Activated naive CD4-positive, alpha-beta T cell treated with anti-CD3 and anti-CD28 coated beads for 36 hours (primary cell): ENCODE measurements at regions of chr7 and their contacts with region 1.

Region 1: GRCh38 chr7:91636129-91636724 is 244.3 kb downstream of the MTERF1 start:
- DNase-seq: peak; percentile 36
- H3K4me3 Mint-ChIP-seq: no peak overlapping the region
- H3K27ac Mint-ChIP-seq: no peak overlapping the region
- H3K4me1 Mint-ChIP-seq: no peaks in the 10 kb centered on the region
- H3K27me3 Mint-ChIP-seq: no peaks in the 10 kb centered on the region

Region 2: DNA sequence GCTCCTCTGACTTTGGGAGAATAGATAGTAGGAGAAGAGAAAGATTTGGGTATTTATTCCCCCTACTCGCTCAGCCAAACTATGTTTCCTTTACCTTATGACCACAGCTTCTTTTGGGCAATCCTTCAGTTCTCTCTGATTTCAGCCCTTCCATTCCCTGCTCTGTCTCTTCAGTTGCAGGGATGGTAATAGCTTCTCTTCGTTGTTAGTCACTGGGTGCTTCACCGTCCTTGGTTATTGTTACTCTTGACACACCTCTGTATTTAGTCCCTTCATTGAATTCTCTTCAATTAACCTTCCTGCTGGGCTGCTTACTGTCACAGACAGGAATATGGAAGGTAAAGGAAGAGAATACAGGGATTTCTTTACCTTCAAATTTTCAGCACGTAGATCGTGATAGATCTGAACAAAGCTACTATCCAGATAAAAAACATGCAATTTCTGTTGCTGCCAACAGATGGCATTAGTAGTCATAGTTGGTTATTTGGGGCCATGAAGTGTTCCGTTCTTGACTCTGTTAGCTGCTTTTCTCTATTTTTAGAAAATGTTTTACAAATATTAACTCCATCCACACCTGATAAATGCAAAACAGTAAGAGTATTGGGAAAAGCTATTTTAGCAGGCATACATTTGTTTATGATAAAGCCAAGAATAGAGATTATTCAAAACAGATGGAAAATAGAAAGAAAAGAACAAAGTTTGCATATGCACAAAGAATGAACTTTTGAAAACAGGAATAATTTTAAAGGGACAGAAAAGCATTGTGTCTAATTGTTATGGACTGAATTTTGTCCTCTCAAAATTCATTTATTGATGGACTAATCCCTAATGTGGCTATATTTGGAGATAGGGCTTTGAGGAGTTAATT is 1180.8 kb before region 1 on chr7:
- CTCF ChIA-PET with region 1: no interaction called
- intact Hi-C with region 1: loop called (anchors 5 kb)
- DNase-seq: no peak
- H3K4me3 Mint-ChIP-seq: no peak overlapping the region
- H3K27ac Mint-ChIP-seq: no peak overlapping the region
- H3K4me1 Mint-ChIP-seq: peaks cover 5% of the 10 kb centered on the region
- H3K27me3 Mint-ChIP-seq: peaks cover 3% of the 10 kb centered on the region

Region 3: GRCh38 chr7:90552521-90552920 is 1083.7 kb before region 1 on chr7:
- CTCF ChIA-PET with region 1: no interaction called
- intact Hi-C with region 1: loop called (anchors 5 kb)
- DNase-seq: no peak
- H3K4me3 Mint-ChIP-seq: no peak overlapping the region
- H3K27ac Mint-ChIP-seq: no peak overlapping the region
- H3K4me1 Mint-ChIP-seq: no peaks in the 10 kb centered on the region
- H3K27me3 Mint-ChIP-seq: peaks cover 26% of the 10 kb centered on the region

Region 4: DNA sequence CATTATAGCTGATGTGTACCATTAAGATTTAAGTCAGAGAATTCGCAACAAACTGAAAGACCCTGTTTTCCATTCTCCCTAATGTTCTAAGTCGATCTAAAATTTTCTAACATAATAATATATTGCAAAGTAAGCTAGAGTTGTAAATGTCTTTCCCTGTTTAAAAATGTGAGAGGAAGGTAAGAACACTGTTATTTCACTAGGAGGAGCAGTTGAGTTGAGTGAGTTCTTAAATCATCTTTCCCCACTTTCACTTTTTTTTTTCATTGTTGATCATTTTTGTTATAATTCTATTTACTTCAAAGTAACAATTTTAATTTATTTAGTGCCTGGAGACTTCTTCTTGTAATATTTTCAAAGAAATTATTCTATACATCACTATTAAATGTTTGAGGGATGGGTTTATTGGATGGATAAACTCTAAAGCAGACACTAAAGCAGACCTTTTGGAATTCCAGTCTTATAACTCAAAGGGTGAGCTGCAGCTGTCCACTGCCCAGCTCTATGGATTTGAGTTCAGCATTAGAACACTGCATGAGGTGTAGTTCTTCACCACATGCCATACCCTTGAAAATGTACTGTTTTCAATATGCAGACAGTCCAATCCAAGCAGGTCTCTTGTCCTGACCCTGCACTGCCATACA is 553.3 kb before region 1 on chr7:
- CTCF ChIA-PET with region 1: no interaction called
- intact Hi-C with region 1: loop called (anchors 1 kb)
- DNase-seq: no peak
- H3K4me3 Mint-ChIP-seq: peak overlapping the region; percentile 13
- H3K27ac Mint-ChIP-seq: no peak overlapping the region
- H3K4me1 Mint-ChIP-seq: peaks cover 36% of the 10 kb centered on the region
- H3K27me3 Mint-ChIP-seq: no peaks in the 10 kb centered on the region

Region 5: DNA sequence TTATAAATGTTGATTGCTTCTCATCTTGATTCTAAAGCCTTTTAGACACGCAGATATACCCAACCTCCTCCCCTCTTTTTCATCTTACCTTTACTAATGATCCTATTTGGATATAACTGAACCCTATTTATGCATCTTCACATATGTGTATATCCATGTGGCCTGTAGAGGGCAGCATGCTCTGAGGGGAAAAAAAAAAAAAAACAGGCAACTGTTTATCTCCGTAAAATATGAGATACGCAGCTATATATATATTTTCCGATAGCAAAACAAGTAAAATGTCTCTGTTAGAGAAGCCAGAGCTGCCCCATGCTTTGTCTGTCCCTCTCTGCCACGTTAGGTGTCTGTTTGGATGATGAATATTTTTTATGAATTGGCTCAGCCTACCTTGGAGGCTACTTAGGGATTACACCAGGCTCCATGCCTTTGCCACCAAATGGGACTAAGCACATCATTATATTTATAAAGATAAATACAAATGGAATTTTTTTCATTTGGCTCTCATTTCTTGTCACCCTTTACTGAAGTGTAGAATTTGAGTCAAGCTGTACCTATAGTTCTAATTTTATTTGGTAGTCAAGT is 546.8 kb before region 1 on chr7:
- CTCF ChIA-PET with region 1: no interaction called
- intact Hi-C with region 1: loop called (anchors 1 kb)
- DNase-seq: peak; percentile 11
- H3K4me3 Mint-ChIP-seq: peak overlapping the region; percentile 19
- H3K27ac Mint-ChIP-seq: no peak overlapping the region
- H3K4me1 Mint-ChIP-seq: peaks cover 17% of the 10 kb centered on the region
- H3K27me3 Mint-ChIP-seq: no peaks in the 10 kb centered on the region

Region 6: GRCh38 chr7:91264046-91264923 is 371.9 kb before region 1 on chr7 and contains the start of gene FZD1:
- CTCF ChIA-PET with region 1: no interaction called
- intact Hi-C with region 1: loop called (anchors 10 kb)
- DNase-seq: peak; percentile 85
- H3K4me3 Mint-ChIP-seq: peak within 1 kb of the TSS; percentile 82
- H3K27ac Mint-ChIP-seq: no peak within 1 kb of the TSS
- H3K4me1 Mint-ChIP-seq: peaks cover 8% of the 10 kb centered on the region
- H3K27me3 Mint-ChIP-seq: peaks cover 53% of the 10 kb centered on the region
- total RNA-seq, gene FZD1: 0.29 to 0.30 TPM

Region 7: DNA sequence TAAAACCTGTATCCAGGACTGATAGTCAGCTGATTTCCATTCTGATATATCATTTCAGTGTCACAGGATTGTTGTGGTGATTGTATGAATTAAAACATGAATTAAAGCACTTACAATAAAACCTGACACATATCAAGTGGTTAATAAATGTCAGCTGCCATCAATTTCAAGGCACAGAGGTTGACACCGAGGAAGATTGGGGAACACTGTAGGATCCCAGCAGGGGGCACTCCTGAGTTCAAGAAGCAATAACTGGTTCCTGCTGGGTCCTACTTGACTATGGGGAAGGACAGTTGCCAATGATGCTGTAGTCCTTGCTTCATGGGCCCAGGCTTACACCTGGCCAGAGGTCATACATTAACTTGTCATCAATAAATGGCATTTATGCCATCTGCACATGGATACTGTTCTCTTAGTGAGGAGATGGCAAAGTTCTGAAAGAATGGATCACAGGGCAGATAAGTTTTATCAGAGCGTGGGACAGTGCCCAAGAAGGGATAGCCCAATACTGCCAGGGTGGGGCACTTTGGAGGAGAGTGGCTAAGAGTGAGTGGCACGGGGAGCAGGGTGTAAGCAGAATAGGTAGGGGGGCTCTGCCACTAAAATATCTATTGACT is 347.9 kb before region 1 on chr7:
- CTCF ChIA-PET with region 1: no interaction called
- intact Hi-C with region 1: loop called (anchors 1 kb)
- DNase-seq: peak; percentile 47
- H3K4me3 Mint-ChIP-seq: no peak overlapping the region
- H3K27ac Mint-ChIP-seq: no peak overlapping the region
- H3K4me1 Mint-ChIP-seq: no peaks in the 10 kb centered on the region
- H3K27me3 Mint-ChIP-seq: peaks cover under 1% of the 10 kb centered on the region

Region 8: GRCh38 chr7:91618776-91619765 is 17.2 kb before region 1 on chr7:
- CTCF ChIA-PET with region 1: no interaction called
- intact Hi-C with region 1: no loop called
- DNase-seq: no peak
- H3K4me3 Mint-ChIP-seq: no peak overlapping the region
- H3K27ac Mint-ChIP-seq: no peak overlapping the region
- H3K4me1 Mint-ChIP-seq: no peaks in the 10 kb centered on the region
- H3K27me3 Mint-ChIP-seq: peaks cover 6% of the 10 kb centered on the region